HepG2 (cell line): ENCODE measurements at regions of chr3 and their contacts with region 1.

Region 1: GRCh38 chr3:124700880-124701684 is 29.2 kb upstream of the UMPS start:
- DNase-seq: peak; percentile 99
- ATAC-seq: peak; percentile 91
- H3K4me3 ChIP-seq: peak overlapping the region; percentile 48 to 76 (median 64)
- H3K27ac ChIP-seq: peak overlapping the region; percentile 98
- H3K4me1 ChIP-seq: peaks cover 67% of the 10 kb centered on the region
- H3K27me3 ChIP-seq: no peaks in the 10 kb centered on the region; a peak in 1 of 5 replicates
- CTCF ChIP-seq: no peak; the same call in 1 of the 2 replicates
- EP300 ChIP-seq: peak; percentile 80 to 85
- POLR2A ChIP-seq: peak; percentile 90 to 91
- RAD21 ChIP-seq: peak; percentile 36; the same call in 1 of the 2 replicates

Region 2: GRCh38 chr3:124620600-124621063 is 80.5 kb before region 1 on chr3:
- CTCF ChIA-PET with region 1: no interaction called
- POLR2A ChIA-PET with region 1: interaction called, 5 read pairs
- in situ Hi-C with region 1: no loop called
- intact Hi-C with region 1: loop called (anchors 2 kb)
- DNase-seq: peak; percentile 96
- ATAC-seq: peak; percentile 97
- H3K4me3 ChIP-seq: peak overlapping the region; percentile 28 to 48 (median 31); a peak in 4 of 6 replicates
- H3K27ac ChIP-seq: peak overlapping the region; percentile 95
- H3K4me1 ChIP-seq: peaks cover 83% of the 10 kb centered on the region
- H3K27me3 ChIP-seq: no peaks in the 10 kb centered on the region
- CTCF ChIP-seq: no peak
- EP300 ChIP-seq: peak; percentile 32 to 97; a peak in 3 of 4 replicates
- POLR2A ChIP-seq: peak in 1 of 2 experiments; percentile 59; a peak in 2 of 4 replicates
- RAD21 ChIP-seq: 0 out of 2 replicates have a peak, but pooled peaks have one; percentile 23

Region 3: DNA sequence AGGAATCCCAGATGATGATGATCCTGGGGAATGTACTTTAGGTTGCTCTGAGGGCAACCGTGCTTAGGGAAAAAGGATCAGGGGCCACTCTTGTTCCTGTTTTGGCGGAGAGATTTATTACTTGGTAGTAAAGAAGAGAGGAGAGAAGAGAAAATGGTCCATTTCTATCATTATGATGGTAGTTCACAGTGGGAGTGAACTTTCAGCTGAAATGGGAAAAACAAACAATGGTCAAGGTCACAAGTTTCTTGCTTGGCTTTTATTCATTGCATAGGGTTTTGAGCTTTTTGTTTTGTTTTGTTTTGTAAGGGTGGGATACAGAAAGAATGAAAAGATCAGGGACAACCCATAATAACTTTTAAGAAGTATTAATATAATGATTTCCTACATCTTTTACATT is 21.5 kb after region 1 on chr3:
- CTCF ChIA-PET with region 1: no interaction called
- POLR2A ChIA-PET with region 1: interaction called, 13 read pairs
- in situ Hi-C with region 1: no loop called
- intact Hi-C with region 1: no loop called
- DNase-seq: peak; percentile 39
- ATAC-seq: no peak
- H3K4me3 ChIP-seq: no peak overlapping the region; a peak in 1 of 6 replicates
- H3K27ac ChIP-seq: peak overlapping the region; percentile 24
- H3K4me1 ChIP-seq: peaks cover 35% of the 10 kb centered on the region
- H3K27me3 ChIP-seq: no peaks in the 10 kb centered on the region
- CTCF ChIP-seq: no peak
- EP300 ChIP-seq: no peak
- POLR2A ChIP-seq: no peak
- RAD21 ChIP-seq: no peak

Region 4: GRCh38 chr3:124730129-124730940 is 29.3 kb after region 1 on chr3 and contains the start of gene UMPS:
- CTCF ChIA-PET with region 1: no interaction called
- POLR2A ChIA-PET with region 1: interaction called, 83 read pairs
- in situ Hi-C with region 1: no loop called
- intact Hi-C with region 1: loop called (anchors 2 kb)
- DNase-seq: peak; percentile 83
- ATAC-seq: peak; percentile 96
- H3K4me3 ChIP-seq: peak within 1 kb of the TSS; percentile 75 to 92 (median 88)
- H3K27ac ChIP-seq: peak within 1 kb of the TSS; percentile 98
- H3K4me1 ChIP-seq: peaks cover 43% of the 10 kb centered on the region
- H3K27me3 ChIP-seq: no peaks in the 10 kb centered on the region; a peak in 1 of 5 replicates
- CTCF ChIP-seq: peak; percentile 8; the same call in 1 of the 2 replicates
- EP300 ChIP-seq: peak; percentile 30 to 46; a peak in 2 of 4 replicates
- POLR2A ChIP-seq: peak; percentile 92
- RAD21 ChIP-seq: peak; percentile 50; the same call in 1 of the 2 replicates
- total RNA-seq, gene UMPS: 74.2 and 117 TPM in 2 replicates